Naive thymus-derived CD4-positive, alpha-beta T cell (primary cell): ENCODE measurements at regions of chrX and their contacts with region 1.

Region 1: GRCh38 chrX:104435249-104435648 is 130.8 kb upstream of the IL1RAPL2 start:
- DNase-seq: no peak
- ATAC-seq: no peak
- H3K4me3 ChIP-seq: no peak overlapping the region
- H3K4me3 Mint-ChIP-seq: no peak overlapping the region
- H3K27ac ChIP-seq: no peak overlapping the region
- H3K27ac Mint-ChIP-seq: no peak overlapping the region
- H3K4me1 ChIP-seq: no peaks in the 10 kb centered on the region
- H3K4me1 Mint-ChIP-seq: no peaks in the 10 kb centered on the region
- H3K27me3 ChIP-seq: no peaks in the 10 kb centered on the region
- H3K27me3 Mint-ChIP-seq: peaks cover 0 to 5% (median 2%) of the 10 kb centered on the region in 5 donors

Region 2: GRCh38 chrX:104445446-104446019 is 10.3 kb after region 1 on chrX:
- CTCF ChIA-PET with region 1: no interaction called
- POLR2A ChIA-PET with region 1: no interaction called
- intact Hi-C with region 1: loop called in 1 of 2 experiments (anchors 1 kb)
- DNase-seq: no peak
- ATAC-seq: no peak
- H3K4me3 ChIP-seq: no peak overlapping the region
- H3K4me3 Mint-ChIP-seq: no peak overlapping the region
- H3K27ac ChIP-seq: no peak overlapping the region
- H3K27ac Mint-ChIP-seq: no peak overlapping the region
- H3K4me1 ChIP-seq: no peaks in the 10 kb centered on the region
- H3K4me1 Mint-ChIP-seq: no peaks in the 10 kb centered on the region
- H3K27me3 ChIP-seq: no peaks in the 10 kb centered on the region
- H3K27me3 Mint-ChIP-seq: no peaks in the 10 kb centered on the region